Activated B cell treated with CpG ODN at 0.5 μM for 24 hours (primary cell): ENCODE measurements at regions of chr19 and their contacts with region 1.

Region 1: DNA sequence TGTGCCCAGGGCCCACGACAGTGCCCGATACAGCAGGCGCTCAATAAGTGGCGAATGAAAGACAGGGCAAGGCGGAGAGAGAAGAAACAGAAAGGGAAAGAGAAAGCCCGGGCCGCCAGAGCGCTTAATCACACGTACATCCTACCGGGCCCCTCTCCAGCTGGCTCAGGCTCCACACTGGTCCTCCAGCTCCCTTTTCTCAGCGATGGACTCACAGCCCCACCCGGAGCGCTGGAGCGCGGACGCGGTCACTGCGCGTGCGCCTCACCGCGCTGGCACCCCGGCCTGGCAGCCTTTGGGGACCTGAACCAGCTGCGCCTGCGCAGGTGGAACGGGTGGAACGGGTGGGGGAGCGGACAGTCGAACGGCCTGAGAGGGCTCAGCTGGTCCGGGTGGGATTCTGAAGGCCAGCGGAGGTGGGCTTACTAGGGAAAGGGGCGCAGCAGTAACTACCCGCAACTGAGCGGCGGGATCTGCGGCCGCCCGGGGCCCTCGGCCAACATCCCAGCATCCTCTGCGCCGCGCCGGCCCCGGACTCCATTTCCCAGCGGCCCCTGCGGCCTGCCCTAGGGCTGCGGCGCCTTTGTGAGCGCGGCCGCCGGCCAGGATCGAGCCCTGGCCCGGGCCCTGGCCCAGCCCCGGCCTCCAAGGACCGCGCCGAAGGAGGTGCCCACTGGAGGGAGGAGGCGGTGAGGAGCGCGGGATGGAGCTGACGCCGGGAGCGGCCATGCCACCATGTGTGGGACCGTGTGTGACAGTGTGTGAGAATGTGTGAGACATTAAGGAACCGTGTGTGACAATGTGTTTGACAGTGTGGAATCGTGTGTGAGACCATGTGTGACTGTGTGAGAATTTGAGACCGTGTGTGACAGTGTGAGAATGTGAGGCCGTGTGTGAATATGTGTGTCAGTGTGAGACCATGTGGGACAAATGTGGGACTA is at the start of gene ZNF583:
- DNase-seq: peak; percentile 93
- ATAC-seq: peak; percentile 87
- H3K4me3 Mint-ChIP-seq: peak within 1 kb of the TSS; percentile 95
- H3K27ac Mint-ChIP-seq: peak within 1 kb of the TSS; percentile 96
- H3K4me1 Mint-ChIP-seq: peaks cover 29% of the 10 kb centered on the region
- H3K27me3 Mint-ChIP-seq: no peaks in the 10 kb centered on the region
- CTCF ChIP-seq: no peak
- total RNA-seq, gene ZNF583: 5.7 and 6.0 TPM in 2 replicates

Region 2: GRCh38 chr19:56383826-56384605 is 20.0 kb before region 1 on chr19:
- CTCF ChIA-PET with region 1: no interaction called
- POLR2A ChIA-PET with region 1: no interaction called
- intact Hi-C with region 1: no loop called
- DNase-seq: no peak
- ATAC-seq: no peak
- H3K4me3 Mint-ChIP-seq: no peak overlapping the region
- H3K27ac Mint-ChIP-seq: no peak overlapping the region
- H3K4me1 Mint-ChIP-seq: no peaks in the 10 kb centered on the region
- H3K27me3 Mint-ChIP-seq: no peaks in the 10 kb centered on the region
- CTCF ChIP-seq: no peak

Region 3: GRCh38 chr19:56567274-56568120 is 163.5 kb after region 1 on chr19 and contains the start of gene ZNF470:
- CTCF ChIA-PET with region 1: no interaction called
- POLR2A ChIA-PET with region 1: no interaction called
- intact Hi-C with region 1: loop called (anchors 10 kb)
- DNase-seq: peak; percentile 86
- ATAC-seq: peak; percentile 98
- H3K4me3 Mint-ChIP-seq: peak within 1 kb of the TSS; percentile 96
- H3K27ac Mint-ChIP-seq: peak within 1 kb of the TSS; percentile 88
- H3K4me1 Mint-ChIP-seq: peaks cover 15% of the 10 kb centered on the region
- H3K27me3 Mint-ChIP-seq: no peaks in the 10 kb centered on the region
- CTCF ChIP-seq: no peak
- total RNA-seq, gene ZNF470: 5.9 and 6.4 TPM in 2 replicates

Region 4: DNA sequence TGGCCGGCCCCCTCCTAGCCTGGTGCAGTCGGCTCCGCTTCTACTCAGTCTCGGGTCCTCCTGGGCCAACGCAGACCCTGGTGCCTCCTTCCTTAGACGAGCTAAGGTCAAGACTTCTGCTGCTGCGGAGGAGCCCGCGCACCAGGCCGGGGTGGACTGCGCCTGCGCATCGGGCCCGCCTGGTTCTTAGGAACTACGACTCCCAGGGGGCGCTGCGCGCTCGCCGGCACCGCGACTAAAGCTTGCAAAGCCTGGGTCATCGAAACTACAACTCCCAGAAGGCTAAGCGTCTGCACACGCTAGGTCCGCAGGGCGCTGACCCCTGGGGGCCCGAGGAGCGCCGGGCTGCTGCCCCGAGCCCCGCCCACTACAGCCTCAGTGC is 267.6 kb after region 1 on chr19 and contains the start of gene ZNF835:
- CTCF ChIA-PET with region 1: no interaction called
- POLR2A ChIA-PET with region 1: no interaction called
- intact Hi-C with region 1: loop called (anchors 1 kb)
- DNase-seq: peak; percentile 91
- ATAC-seq: peak; percentile 98
- H3K4me3 Mint-ChIP-seq: peak within 1 kb of the TSS; percentile 94
- H3K27ac Mint-ChIP-seq: peak within 1 kb of the TSS; percentile 84
- H3K4me1 Mint-ChIP-seq: peaks cover 16% of the 10 kb centered on the region
- H3K27me3 Mint-ChIP-seq: no peaks in the 10 kb centered on the region
- CTCF ChIP-seq: no peak
- total RNA-seq, gene ZNF835: 5.5 and 5.7 TPM in 2 replicates

Region 5: GRCh38 chr19:56707821-56708220 is 303.8 kb after region 1 on chr19:
- CTCF ChIA-PET with region 1: no interaction called
- POLR2A ChIA-PET with region 1: no interaction called
- intact Hi-C with region 1: no loop called
- DNase-seq: no peak
- ATAC-seq: no peak
- H3K4me3 Mint-ChIP-seq: no peak overlapping the region
- H3K27ac Mint-ChIP-seq: no peak overlapping the region
- H3K4me1 Mint-ChIP-seq: no peaks in the 10 kb centered on the region
- H3K27me3 Mint-ChIP-seq: no peaks in the 10 kb centered on the region
- CTCF ChIP-seq: no peak

Region 6: GRCh38 chr19:57282011-57282643 is 878.1 kb after region 1 on chr19:
- CTCF ChIA-PET with region 1: no interaction called
- POLR2A ChIA-PET with region 1: no interaction called
- intact Hi-C with region 1: no loop called
- DNase-seq: no peak
- ATAC-seq: peak; percentile 20
- H3K4me3 Mint-ChIP-seq: no peak overlapping the region
- H3K27ac Mint-ChIP-seq: no peak overlapping the region
- H3K4me1 Mint-ChIP-seq: peaks cover 46% of the 10 kb centered on the region
- H3K27me3 Mint-ChIP-seq: no peaks in the 10 kb centered on the region
- CTCF ChIP-seq: no peak